ENCODE measurements at regions of chr6 and their contacts with region 1.

Region 1: DNA sequence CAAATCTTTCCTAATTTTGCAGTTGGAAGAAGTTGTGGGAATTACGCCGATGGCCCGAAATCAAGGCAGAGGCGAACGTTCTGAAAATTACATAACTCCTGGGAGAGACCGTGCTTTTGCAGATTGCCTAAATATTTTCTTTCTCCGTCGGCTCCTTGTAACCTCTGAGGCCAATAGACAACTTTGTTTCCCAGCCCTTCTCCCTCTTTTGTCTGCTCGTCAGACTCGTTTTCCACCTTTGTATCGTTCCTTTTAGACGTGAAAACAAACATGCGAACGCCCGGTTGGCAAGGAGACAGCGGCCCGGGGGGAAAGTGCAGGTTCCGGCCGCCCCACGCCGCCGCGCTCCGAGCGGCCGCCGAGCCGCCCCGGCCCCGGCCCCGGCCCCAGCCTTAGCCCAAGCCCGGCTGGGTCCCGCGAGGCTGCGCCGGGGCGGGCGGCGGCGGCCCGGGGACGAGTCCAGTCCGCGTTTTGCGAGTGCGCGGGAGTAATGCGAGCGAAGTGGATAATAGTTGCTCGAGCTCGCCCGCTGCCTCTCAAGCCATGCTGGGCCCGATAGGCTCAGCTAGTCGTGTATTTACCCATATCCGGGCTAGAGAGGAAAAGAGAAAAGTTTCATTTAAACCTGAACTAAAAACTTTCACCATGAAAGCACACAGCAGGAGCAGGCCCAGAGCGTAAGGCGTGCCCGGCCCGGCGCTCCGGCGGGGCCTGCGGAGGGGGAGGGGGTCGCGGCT is at the start of gene ARID1B:
- DNase-seq: peak; percentile 77

Region 2: GRCh38 chr6:156686995-156687788 is 89.8 kb before region 1 on chr6:
- CTCF ChIA-PET with region 1: interaction called, 3 read pairs
- POLR2A ChIA-PET with region 1: interaction called, 19 read pairs
- DNase-seq: peak; percentile 97